Activated CD8-positive, alpha-beta memory T cell treated with anti-CD3 and anti-CD28 coated beads, Interleukin-2, amount 10 ng/mL, durations not matched to agents 7 days and 5 days (primary cell): ENCODE measurements at regions of chr9 and their contacts with region 1.

Region 1: DNA sequence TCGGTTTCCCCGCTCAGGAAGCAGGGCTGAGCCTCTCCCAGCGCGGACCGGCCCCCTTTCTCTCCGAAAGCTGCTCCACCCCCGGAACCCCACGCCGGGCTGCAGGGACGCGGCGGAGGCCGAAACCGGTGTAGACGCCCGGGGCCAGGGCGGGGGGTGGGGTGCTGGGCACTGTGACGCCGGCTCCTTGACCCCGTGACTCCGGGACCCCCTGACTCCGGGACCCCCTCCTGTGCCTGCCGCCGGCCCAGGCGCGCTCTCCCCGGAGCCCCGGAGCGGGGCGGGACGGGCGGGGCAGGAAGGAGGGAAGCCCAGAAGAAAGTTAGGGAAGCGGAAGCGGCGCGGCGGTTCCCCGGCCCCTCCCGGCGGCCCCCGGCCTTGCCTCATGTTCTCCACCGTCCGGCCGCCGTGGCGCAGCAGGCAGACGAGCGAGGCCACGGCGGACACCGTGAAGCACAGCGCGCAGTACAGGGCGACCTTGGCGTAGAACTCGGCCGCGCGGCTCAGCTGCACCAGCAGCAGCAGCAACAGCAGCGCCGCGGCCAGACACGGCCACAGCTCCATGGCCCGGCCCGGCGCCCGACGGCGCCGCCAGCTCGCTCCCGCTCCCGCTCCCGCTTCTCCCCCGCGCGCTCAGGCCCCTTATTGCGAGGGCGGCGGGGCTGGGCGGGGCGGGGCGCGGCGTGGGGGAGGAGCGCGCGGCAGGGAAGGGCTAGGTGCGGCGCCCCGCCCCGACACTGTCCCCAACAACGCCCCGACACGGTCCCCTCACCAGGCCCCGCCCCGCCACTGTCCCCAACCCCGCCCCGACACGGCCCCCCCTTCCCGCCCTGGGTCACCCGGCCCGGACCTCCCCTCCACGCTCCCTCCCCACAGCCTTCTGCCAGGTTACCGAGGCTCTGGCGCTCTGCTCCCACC is at the start of gene AGPAT2:
- DNase-seq: peak; percentile 79
- ATAC-seq: peak; percentile 90
- H3K4me3 Mint-ChIP-seq: peak within 1 kb of the TSS; percentile 67
- H3K27ac Mint-ChIP-seq: peak within 1 kb of the TSS; percentile 59
- H3K4me1 Mint-ChIP-seq: peaks cover 13% of the 10 kb centered on the region
- H3K27me3 Mint-ChIP-seq: peaks cover 10% of the 10 kb centered on the region
- total RNA-seq, gene AGPAT2: 16.9 to 20.5 TPM

Region 2: DNA sequence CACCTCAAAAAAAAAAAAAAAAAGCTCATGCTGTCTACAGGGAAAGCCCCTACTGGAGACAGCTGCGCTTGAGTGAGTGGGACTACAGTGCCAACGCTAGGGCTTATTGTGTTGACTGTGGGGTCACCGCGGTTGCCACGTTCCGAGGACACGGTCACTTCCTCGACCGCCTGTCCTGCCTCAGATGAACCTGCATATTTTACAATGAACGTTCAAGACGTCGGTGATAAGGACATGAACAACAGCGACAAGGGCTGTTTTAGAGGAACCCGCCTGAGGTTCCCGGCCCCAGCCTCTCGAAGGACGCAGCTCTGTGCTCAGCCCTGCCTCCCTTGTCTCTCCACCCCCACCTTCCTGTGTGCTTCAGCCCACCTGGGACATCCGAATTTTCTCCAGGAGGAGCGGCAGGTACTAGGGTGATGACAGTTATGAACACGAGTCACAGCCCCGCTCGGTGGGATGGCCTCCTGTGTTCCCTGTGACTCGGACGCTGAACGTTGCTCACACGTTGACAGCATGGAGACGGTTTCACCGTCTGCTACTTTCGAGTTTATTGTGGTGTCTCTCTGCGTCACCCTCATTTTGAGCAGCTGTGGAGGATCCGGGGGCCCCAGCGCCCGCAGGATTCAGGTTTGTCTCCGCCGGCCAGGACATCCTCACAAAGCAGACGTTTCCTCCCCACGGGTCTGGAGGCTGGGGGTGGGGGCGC is 14.1 kb after region 1 on chr9:
- CTCF ChIA-PET with region 1: interaction called, 10 read pairs
- DNase-seq: peak; percentile 84
- ATAC-seq: peak; percentile 92
- H3K4me3 Mint-ChIP-seq: peak overlapping the region; percentile 66
- H3K27ac Mint-ChIP-seq: peak overlapping the region; percentile 81
- H3K4me1 Mint-ChIP-seq: peaks cover 29% of the 10 kb centered on the region
- H3K27me3 Mint-ChIP-seq: peaks cover 32% of the 10 kb centered on the region